Left lung (tissue), 14 donors: ENCODE measurements at regions of chr5 and their contacts with region 1.

Region 1: GRCh38 chr5:132007399-132008165 is 3.9 kb downstream of the ACSL6 start:
- DNase-seq: peak in 3 of 4 donors; percentile 30 to 69 (median 63)
- ATAC-seq: peak; percentile 82
- H3K4me3 ChIP-seq: no peak overlapping the region
- H3K27ac ChIP-seq: no peak overlapping the region
- H3K4me1 ChIP-seq: peaks cover 0 to 12% of the 10 kb centered on the region in 2 donors
- H3K27me3 ChIP-seq: peaks cover 10 to 46% of the 10 kb centered on the region in 2 donors
- CTCF ChIP-seq: peak; percentile 72 to 86

Region 2: DNA sequence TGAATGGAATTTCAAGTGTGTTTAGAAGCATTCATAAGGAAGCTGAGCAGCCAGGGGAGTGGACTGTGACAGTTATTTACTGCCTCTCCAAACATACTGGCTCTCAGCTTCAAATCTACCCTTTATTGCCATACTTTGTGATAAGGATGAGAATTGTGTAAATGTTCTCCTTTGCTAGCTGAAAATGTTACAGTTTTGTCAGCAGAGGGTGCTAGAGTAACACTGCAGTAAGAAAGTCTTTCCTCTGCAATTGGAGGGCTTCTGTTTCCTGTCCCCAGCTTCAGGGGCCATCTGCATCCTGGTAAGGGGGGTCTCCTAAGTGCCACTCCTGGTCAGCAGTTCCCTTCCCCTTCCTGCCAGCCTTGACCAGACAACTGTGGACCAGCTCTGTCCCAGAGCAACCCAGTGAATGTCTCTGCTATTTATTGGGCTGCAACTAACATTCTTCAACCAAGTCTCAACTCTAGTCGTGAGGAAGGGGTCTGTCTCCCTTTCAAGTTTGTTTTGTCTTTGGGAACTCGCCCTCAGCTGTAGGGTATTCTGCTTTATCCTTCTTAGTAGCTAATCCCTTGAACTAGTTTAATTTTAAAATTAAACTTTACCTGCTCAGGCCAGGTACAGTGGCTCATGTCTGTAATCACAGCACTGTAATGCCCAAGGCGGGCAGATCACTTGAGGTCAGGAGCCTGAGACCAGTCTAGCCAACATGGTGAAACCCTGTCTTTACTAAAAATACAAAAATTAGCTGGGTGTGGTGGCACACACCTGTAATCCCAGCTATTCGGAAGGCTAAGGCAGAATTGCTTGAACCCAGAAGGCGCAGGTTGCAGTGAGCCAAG is 417.9 kb before region 1 on chr5:
- intact Hi-C with region 1: loop called in 1 of 2 experiments (anchors 5 kb)
- DNase-seq: peak in 2 of 4 donors; percentile 54 to 73
- ATAC-seq: peak; percentile 86
- H3K4me3 ChIP-seq: no peak overlapping the region
- H3K27ac ChIP-seq: no peak overlapping the region
- H3K4me1 ChIP-seq: peaks cover 0 to 18% of the 10 kb centered on the region in 2 donors
- H3K27me3 ChIP-seq: no peaks in the 10 kb centered on the region
- CTCF ChIP-seq: peak; percentile 62 to 93

Region 3: GRCh38 chr5:131747180-131748105 is 260.1 kb before region 1 on chr5:
- intact Hi-C with region 1: no loop called
- DNase-seq: no peak
- ATAC-seq: peak; percentile 46
- H3K4me3 ChIP-seq: no peak overlapping the region
- H3K27ac ChIP-seq: peak overlapping the region in 1 of 2 donors; percentile 77
- H3K4me1 ChIP-seq: peaks cover 0 to 26% of the 10 kb centered on the region in 2 donors
- H3K27me3 ChIP-seq: no peaks in the 10 kb centered on the region
- CTCF ChIP-seq: no peak

Region 4: DNA sequence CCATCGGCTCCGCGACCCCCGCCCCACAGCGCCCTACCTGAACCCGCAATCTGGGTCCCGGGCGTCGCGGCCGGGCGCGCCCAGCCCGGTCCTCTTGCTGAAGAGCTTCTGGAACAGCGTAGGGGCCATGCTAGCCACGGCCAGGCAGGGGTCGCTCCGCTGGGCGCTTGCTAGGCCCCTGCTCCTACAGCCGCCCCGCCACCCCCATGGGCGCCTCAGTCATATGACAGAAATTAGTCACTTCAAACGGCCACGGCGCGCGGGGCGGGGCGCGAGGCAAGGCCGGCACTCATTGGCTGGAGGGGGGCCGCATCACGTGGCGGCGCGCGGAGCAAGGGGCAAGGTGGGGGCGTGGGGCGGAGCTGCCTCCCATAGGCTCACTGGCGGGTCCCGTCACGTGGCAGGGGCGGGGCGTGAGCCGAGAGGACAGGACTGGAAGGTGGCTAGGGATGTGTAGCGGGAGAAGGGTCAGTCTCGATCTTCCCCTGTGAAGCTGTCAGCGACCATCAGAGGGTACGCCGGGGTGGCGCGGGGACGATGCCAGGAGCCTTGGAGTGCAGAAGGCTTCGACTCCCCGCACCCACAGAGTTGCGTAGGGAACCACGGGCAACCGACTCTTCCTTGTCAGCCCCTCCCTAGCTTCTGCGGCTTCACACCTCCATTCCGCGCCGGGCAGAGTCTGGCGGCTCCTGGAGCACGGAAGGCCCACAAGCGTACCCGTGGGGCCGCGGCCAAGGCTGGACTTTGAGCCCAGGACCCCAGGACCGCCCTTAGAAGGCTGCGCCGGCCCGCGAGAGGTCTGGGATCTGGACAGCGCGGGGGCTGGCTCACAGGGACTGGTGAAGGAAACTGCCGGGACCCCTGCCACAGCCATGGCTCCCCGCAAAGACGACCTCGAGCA is 210.5 kb before region 1 on chr5 and contains the start of gene FNIP1:
- intact Hi-C with region 1: loop called in 1 of 2 experiments (anchors 10 kb)
- DNase-seq: peak; percentile 95 to 100 (median 99)
- ATAC-seq: peak; percentile 97
- H3K4me3 ChIP-seq: peak within 1 kb of the TSS; percentile 68 to 97
- H3K27ac ChIP-seq: peak within 1 kb of the TSS; percentile 97 to 100
- H3K4me1 ChIP-seq: peaks cover 15 to 39% of the 10 kb centered on the region in 2 donors
- H3K27me3 ChIP-seq: no peaks in the 10 kb centered on the region
- CTCF ChIP-seq: no peak
- polyA plus RNA-seq, gene FNIP1: 21.5 to 28.7 (median 24.0) TPM

Region 5: DNA sequence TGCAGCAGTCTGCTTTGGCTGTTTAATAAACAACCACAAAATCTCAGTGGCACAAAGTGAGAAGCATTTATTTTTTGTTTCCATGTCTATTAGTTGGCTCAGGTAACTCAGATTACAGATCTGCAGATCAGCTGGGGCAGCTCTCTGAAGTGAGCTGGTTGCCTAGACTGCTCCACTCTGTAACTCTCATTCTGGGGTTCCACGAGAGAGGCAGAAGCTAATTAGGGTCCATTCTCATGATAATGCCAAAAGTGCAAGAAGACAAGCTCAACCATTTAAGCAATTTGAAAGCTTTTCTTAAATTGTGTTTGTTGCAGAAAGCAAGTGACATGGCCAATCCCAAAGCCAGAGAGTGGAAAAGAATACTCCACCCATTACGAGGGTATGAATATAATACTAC is 75.3 kb before region 1 on chr5:
- intact Hi-C with region 1: no loop called
- DNase-seq: no peak
- ATAC-seq: no peak
- H3K4me3 ChIP-seq: no peak overlapping the region
- H3K27ac ChIP-seq: no peak overlapping the region
- H3K4me1 ChIP-seq: no peaks in the 10 kb centered on the region
- H3K27me3 ChIP-seq: no peaks in the 10 kb centered on the region
- CTCF ChIP-seq: no peak